ENCODE measurements at regions of chr3 and their contacts with region 1.

Region 1: DNA sequence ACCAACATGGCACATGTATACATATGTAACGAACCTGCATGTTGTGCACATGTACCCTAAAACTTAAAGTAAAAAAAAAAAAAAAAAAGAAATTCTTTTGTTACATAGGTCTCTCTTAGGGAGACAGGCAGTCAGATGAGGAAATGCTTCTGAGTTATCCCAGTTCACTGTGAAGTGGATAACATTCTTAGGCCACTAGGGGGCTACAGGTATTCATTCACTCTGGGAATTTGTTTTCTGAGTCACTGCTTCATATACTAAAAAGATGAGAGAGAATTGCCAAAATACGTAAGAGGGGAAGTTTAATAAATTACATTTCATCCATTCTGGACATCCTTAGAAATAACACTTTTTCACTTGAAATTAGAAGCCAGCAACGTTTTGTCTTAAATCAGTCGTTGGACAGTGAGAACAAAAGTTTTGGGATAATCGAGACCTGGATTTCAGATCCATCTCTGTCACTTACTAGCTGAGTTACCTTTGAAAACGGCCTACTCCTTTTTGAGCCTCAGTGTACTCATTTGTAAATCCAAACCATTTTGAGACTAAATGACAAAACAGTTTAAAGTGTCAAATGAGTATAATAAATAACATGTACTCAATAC is 738.4 kb upstream of the ALCAM start:
- DNase-seq: no peak
- H3K4me3 ChIP-seq: no peak overlapping the region
- H3K27ac ChIP-seq: no peak overlapping the region
- H3K4me1 ChIP-seq: no peaks in the 10 kb centered on the region
- H3K27me3 ChIP-seq: no peaks in the 10 kb centered on the region
- CTCF ChIP-seq: peak; percentile 31 to 54 (median 41)
- EP300 ChIP-seq: no peak
- POLR2A ChIP-seq: no peak

Region 2: DNA sequence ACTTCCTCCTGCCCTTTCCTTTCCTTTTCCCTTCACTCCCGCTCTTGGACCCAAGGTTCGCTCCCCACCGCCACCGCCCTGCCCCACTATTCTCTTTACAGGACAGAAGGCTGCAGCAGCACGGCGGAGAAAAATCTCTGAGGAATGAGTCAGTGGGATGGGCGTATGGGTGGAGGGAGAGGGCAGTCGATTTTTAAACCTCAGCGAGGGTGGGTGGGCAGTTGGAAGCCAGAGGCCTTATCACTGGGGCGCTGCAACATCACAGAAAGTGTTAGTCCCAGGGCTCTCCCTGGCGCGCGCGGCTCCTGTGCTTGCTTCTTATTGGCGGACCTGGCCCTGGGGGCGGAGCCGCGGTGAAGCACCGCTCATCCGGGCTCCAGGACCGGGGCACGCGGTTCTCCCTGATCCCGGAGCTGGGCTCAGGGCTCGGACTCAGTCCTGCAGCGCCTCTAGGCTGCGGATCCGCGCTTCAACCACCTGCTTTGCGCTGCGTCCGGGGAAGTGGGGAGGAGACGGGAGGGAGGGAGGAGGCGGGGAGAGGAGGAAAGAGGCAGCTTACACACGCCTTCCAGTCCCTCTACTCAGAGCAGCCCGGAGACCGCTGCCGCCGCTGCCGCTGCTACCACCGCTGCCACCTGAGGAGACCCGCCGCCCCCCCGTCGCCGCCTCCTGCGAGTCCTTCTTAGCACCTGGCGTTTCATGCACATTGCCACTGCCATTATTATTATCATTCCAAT is 738.2 kb after region 1 on chr3 and contains the start of gene ALCAM:
- intact Hi-C with region 1: loop called (anchors 5 kb)
- DNase-seq: peak; percentile 97
- H3K4me3 ChIP-seq: peak within 1 kb of the TSS; percentile 66 to 74 (median 70)
- H3K27ac ChIP-seq: peak within 1 kb of the TSS; percentile 74 to 82 (median 76)
- H3K4me1 ChIP-seq: peaks cover 32 to 44% (median 39%) of the 10 kb centered on the region in 4 donors
- H3K27me3 ChIP-seq: no peaks in the 10 kb centered on the region
- CTCF ChIP-seq: peak; percentile 62 to 66 (median 63)
- EP300 ChIP-seq: no peak
- POLR2A ChIP-seq: no peak
- total RNA-seq, gene ALCAM: 19.0 to 26.2 (median 22.6) TPM